Activated CD4-positive, alpha-beta T cell treated with anti-CD3 and anti-CD28 coated beads for 36 hours (primary cell): ENCODE measurements at regions of chr5 and their contacts with region 1.

Region 1: GRCh38 chr5:6712577-6713275 is 506 bp upstream of the TENT4A start:
- DNase-seq: peak; percentile 98
- ATAC-seq: peak; percentile 84
- H3K4me3 Mint-ChIP-seq: peak overlapping the region; percentile 78
- H3K27ac Mint-ChIP-seq: peak overlapping the region; percentile 95
- H3K4me1 Mint-ChIP-seq: peaks cover 30% of the 10 kb centered on the region
- H3K27me3 Mint-ChIP-seq: no peaks in the 10 kb centered on the region

Region 2: DNA sequence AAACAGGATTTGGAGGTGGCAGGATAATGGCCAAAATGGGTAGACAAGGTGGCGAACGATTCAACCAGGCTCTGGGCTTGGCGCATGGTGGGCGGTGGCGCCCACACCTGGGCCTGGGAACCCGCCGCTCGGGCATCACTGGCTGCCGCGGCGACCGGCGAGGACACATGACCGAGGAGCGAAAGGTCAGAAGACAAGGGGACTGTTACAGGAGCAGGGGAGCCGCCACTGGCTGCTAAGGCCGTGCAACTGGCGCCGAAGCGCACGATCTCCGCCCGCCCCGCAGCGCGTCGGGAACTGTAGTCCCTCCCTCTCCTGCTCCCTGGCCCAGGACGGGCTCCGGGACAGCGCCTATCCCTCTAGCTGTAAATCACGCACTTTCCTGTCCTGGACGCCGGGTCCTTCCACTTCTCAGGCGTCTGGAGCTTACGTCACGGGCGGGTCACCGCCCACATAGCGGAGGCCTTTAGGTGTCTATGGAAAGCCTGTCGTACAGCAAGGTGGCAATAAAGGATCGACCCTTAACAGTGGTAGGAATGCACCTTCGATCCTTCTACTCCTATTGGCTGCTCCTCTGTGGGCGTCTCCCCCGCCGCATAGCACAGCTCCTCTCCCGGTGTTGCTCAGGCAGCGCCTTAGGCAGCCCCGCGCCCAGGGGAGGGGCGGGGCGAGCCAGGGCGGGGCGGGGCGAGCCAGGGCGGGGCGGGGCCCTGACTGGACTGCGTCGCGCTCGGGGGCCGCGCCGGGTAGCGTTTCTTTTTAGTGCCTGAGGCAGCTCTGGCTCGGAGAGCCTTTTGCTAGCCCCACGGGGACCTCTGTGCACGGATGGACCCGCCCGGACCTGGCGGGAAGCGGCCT is 1290.5 kb before region 1 on chr5 and contains the start of gene ICE1:
- CTCF ChIA-PET with region 1: no interaction called
- POLR2A ChIA-PET with region 1: no interaction called
- intact Hi-C with region 1: loop called (anchors 1 to 5 kb)
- DNase-seq: peak; percentile 95
- ATAC-seq: peak; percentile 91
- H3K4me3 Mint-ChIP-seq: peak within 1 kb of the TSS; percentile 90
- H3K27ac Mint-ChIP-seq: peak within 1 kb of the TSS; percentile 91
- H3K4me1 Mint-ChIP-seq: peaks cover 12% of the 10 kb centered on the region
- H3K27me3 Mint-ChIP-seq: no peaks in the 10 kb centered on the region
- total RNA-seq, gene ICE1: 26.5 to 27.4 TPM

Region 3: GRCh38 chr5:6632917-6633468 is 79.7 kb before region 1 on chr5 and contains the starts of genes NSUN2 and SRD5A1:
- CTCF ChIA-PET with region 1: interaction called, 3 read pairs
- POLR2A ChIA-PET with region 1: interaction called, 3 read pairs
- intact Hi-C with region 1: loop called (anchors 1 kb)
- DNase-seq: peak; percentile 96
- ATAC-seq: peak; percentile 89
- H3K4me3 Mint-ChIP-seq: peak within 1 kb of the TSS; percentile 99
- H3K27ac Mint-ChIP-seq: peak within 1 kb of the TSS; percentile 98
- H3K4me1 Mint-ChIP-seq: peaks cover 31% of the 10 kb centered on the region
- H3K27me3 Mint-ChIP-seq: no peaks in the 10 kb centered on the region
- total RNA-seq, gene NSUN2: 91.1 to 97.1 TPM
- total RNA-seq, gene SRD5A1: 7.6 to 11.1 TPM

Region 4: DNA sequence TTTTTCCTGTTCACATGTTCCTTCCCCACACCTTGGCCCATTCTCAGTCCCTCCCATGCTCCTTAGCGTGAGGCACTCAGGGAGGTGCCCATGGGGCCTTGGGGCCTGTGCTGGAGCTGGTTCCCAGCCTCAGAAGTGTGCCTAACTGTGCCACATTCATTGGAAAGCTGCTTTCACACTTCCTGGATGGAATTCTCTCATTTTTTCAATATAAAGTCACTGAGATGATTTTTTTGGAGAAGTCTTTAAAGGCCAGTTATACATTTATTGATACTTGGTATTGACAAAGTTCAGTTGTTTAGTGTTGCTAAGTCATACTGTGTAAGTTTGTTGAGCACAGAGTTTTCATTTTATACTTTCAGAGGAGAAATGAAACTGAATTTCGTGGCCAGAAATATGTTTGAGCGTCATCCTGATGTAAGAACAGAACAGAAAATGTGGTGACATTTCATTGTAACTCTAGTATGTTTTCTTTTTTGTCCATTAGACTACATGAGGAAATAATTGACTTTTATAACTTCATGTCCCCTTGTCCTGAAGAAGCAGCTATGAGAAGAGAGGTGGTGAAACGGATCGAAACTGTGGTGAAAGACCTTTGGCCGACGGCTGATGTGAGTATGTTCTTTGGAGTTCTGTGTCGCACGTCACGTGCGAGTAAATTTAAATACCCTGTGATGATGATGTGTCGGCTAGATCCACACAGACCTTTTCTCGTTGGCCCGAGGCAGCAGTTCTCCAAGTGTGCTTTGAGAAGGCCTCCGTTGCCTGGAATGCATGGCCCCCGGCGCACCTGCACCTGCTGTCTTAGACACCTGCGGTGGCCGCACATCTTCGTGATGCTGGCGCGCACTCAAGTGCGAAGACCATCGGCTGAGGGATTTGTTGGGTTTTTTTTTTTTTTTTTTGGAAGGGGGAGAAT is 24.6 kb after region 1 on chr5:
- CTCF ChIA-PET with region 1: no interaction called
- POLR2A ChIA-PET with region 1: no interaction called
- intact Hi-C with region 1: loop called in 1 of 2 experiments (anchors 1 kb)
- DNase-seq: peak; percentile 43
- ATAC-seq: peak; percentile 78
- H3K4me3 Mint-ChIP-seq: peak overlapping the region; percentile 34
- H3K27ac Mint-ChIP-seq: peak overlapping the region; percentile 97
- H3K4me1 Mint-ChIP-seq: peaks cover 52% of the 10 kb centered on the region
- H3K27me3 Mint-ChIP-seq: no peaks in the 10 kb centered on the region

Region 5: DNA sequence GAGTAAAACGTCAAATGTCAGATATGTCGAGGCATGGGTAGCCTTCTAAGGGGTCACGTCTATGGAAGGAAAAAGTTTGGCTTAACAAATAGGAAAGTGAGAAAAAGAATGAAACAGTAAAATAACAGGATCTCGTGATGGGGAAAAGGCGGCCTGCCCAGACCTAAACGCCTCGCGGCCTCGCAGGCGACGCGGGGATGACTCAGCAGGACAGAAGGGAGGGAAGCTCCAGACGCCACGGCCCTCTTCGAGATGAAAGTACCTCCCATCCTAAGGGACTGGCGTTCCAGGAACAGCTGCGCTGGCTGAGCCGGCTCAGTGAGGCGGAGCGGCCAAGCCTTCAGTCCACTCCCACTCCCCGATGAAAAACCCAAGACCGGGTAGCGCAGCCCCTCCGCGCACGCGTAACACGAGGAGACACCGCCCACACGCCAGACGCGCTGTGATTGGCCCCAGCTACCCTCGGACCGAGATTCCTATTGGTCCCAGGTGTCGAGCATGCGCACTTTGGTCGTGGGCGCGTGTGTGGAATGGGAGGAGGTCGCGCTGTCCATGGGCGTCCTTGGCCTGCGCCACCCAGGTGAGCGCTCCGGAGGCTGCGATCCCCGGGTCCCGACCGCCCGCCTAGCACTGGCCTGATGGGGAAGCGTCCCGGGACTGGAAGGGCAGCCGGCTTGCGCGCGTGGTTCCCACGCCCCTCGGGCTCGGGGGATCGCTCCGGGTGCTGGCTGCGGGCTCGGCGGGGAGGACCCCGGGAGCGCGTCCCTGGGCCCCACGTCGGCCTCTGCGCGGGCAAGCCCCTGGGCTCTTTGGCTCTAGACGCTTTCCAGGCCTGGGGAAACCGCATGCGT is 1744.7 kb after region 1 on chr5:
- CTCF ChIA-PET with region 1: no interaction called
- POLR2A ChIA-PET with region 1: no interaction called
- intact Hi-C with region 1: loop called in 1 of 2 experiments (anchors 10 kb)
- DNase-seq: peak; percentile 92
- ATAC-seq: peak; percentile 96
- H3K4me3 Mint-ChIP-seq: peak overlapping the region; percentile 81
- H3K27ac Mint-ChIP-seq: peak overlapping the region; percentile 71
- H3K4me1 Mint-ChIP-seq: peaks cover 20% of the 10 kb centered on the region
- H3K27me3 Mint-ChIP-seq: no peaks in the 10 kb centered on the region